ENCODE measurements at regions of chr1 and their contacts with region 1.

Region 1: GRCh38 chr1:91929250-91929649 is 20.0 kb upstream of the BRDT start:
- DNase-seq: peak; percentile 53
- H3K4me3 ChIP-seq: no peak overlapping the region
- H3K27ac ChIP-seq: no peak overlapping the region
- H3K4me1 ChIP-seq: peaks cover 4% of the 10 kb centered on the region
- H3K27me3 ChIP-seq: no peaks in the 10 kb centered on the region
- CTCF ChIP-seq: no peak
- POLR2A ChIP-seq: no peak

Region 2: GRCh38 chr1:91404151-91405012 is 524.9 kb before region 1 on chr1 and contains the start of gene HFM1:
- CTCF ChIA-PET with region 1: interaction called, 8 read pairs
- POLR2A ChIA-PET with region 1: no interaction called
- dilution Hi-C with region 1: no loop called
- intact Hi-C with region 1: loop called (anchors 5 kb)
- DNase-seq: peak; percentile 58
- H3K4me3 ChIP-seq: peak within 1 kb of the TSS; percentile 57 to 74 (median 71)
- H3K27ac ChIP-seq: no peak within 1 kb of the TSS
- H3K4me1 ChIP-seq: peaks cover 3% of the 10 kb centered on the region
- H3K27me3 ChIP-seq: peaks cover 4 to 13% of the 10 kb centered on the region in 2 experiments
- CTCF ChIP-seq: no peak
- POLR2A ChIP-seq: no peak
- total RNA-seq, gene HFM1: 0.11 and 0.72 TPM in 2 replicates

Region 3: DNA sequence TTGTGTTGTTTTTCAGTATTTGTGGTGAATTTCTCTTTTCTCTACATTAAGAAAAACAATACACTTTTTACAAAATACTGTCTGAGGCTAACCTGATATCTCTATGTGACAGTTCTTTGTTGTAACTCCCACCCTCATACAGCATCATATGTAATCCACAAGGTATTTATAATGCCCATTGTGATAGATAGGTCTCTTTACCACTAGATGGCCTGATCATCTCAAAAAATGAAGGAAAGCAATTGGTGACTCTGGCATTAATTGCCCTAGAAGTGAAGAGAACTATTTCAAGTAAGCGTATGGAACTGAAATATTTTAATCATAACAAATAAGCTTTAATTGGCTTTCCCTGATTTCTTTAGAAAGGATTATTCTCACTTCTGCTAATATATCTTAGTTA is 488.4 kb before region 1 on chr1:
- CTCF ChIA-PET with region 1: interaction called, 4 read pairs
- POLR2A ChIA-PET with region 1: no interaction called
- dilution Hi-C with region 1: no loop called
- intact Hi-C with region 1: loop called (anchors 5 kb)
- DNase-seq: peak; percentile 12
- H3K4me3 ChIP-seq: no peak overlapping the region
- H3K27ac ChIP-seq: no peak overlapping the region
- H3K4me1 ChIP-seq: no peaks in the 10 kb centered on the region
- H3K27me3 ChIP-seq: no peaks in the 10 kb centered on the region
- CTCF ChIP-seq: no peak
- POLR2A ChIP-seq: no peak

Region 4: DNA sequence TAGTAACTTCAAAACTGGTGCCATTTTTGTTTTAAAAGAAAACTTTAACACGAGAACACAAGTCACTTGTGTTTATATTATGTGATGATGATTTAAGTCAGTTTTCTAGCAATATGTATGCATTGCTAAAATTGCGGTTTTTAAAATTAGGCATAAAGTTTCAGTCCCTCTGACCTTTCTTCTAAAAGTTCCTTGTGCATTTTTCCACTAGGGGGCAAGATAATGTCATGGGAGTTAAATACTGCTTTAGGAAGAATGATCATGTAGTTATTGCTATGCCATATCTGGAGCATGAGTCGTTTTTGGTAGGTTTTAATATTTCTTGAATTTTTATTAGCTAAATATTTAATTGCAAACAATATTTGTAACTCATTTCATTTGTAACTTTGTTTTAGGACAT is 417.9 kb before region 1 on chr1:
- CTCF ChIA-PET with region 1: interaction called, 119 read pairs
- POLR2A ChIA-PET with region 1: no interaction called
- dilution Hi-C with region 1: no loop called
- intact Hi-C with region 1: loop called (anchors 1 kb)
- DNase-seq: peak; percentile 57
- H3K4me3 ChIP-seq: no peak overlapping the region
- H3K27ac ChIP-seq: no peak overlapping the region
- H3K4me1 ChIP-seq: no peaks in the 10 kb centered on the region
- H3K27me3 ChIP-seq: no peaks in the 10 kb centered on the region
- CTCF ChIP-seq: peak; percentile 24 to 43
- POLR2A ChIP-seq: no peak

Region 5: GRCh38 chr1:91529856-91530255 is 399.4 kb before region 1 on chr1:
- CTCF ChIA-PET with region 1: interaction called, 16 read pairs
- POLR2A ChIA-PET with region 1: no interaction called
- dilution Hi-C with region 1: no loop called
- intact Hi-C with region 1: loop called (anchors 1 kb)
- DNase-seq: peak; percentile 43
- H3K4me3 ChIP-seq: no peak overlapping the region
- H3K27ac ChIP-seq: no peak overlapping the region
- H3K4me1 ChIP-seq: no peaks in the 10 kb centered on the region
- H3K27me3 ChIP-seq: no peaks in the 10 kb centered on the region
- CTCF ChIP-seq: peak in 1 of 2 donors; percentile 2
- POLR2A ChIP-seq: no peak

Region 6: DNA sequence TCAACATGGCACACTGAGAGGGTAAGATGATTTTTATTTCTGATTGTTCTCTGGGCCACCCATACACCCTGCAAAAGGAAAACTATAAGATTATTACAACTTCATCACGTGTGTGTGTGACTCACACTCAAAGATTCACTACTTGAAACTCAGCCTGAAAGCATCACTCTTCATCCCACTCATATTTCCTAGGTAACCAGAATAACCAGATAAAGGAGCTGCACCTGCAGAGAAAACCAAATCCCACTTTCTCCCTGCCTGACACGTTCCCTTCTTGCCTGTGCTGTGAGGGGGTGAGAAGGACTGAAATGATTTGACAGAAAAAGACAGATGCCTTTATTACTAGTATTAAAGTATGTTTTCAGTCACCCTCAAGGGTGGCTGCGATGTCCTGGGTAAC is 174.9 kb before region 1 on chr1:
- CTCF ChIA-PET with region 1: no interaction called
- POLR2A ChIA-PET with region 1: no interaction called
- dilution Hi-C with region 1: no loop called
- intact Hi-C with region 1: no loop called
- DNase-seq: no peak
- H3K4me3 ChIP-seq: no peak overlapping the region
- H3K27ac ChIP-seq: no peak overlapping the region
- H3K4me1 ChIP-seq: no peaks in the 10 kb centered on the region
- H3K27me3 ChIP-seq: no peaks in the 10 kb centered on the region
- CTCF ChIP-seq: no peak
- POLR2A ChIP-seq: no peak

Region 7: GRCh38 chr1:91791103-91791502 is 138.1 kb before region 1 on chr1:
- CTCF ChIA-PET with region 1: no interaction called
- POLR2A ChIA-PET with region 1: no interaction called
- dilution Hi-C with region 1: no loop called
- intact Hi-C with region 1: loop called (anchors 5 kb)
- DNase-seq: no peak
- H3K4me3 ChIP-seq: no peak overlapping the region
- H3K27ac ChIP-seq: no peak overlapping the region
- H3K4me1 ChIP-seq: peaks cover 14% of the 10 kb centered on the region
- H3K27me3 ChIP-seq: no peaks in the 10 kb centered on the region
- CTCF ChIP-seq: no peak
- POLR2A ChIP-seq: no peak

Measured in endothelial cell of umbilical vein (primary cell).